GM10248 (cell line): ENCODE measurements at regions of chr7 and their contacts with region 1.

Region 1: DNA sequence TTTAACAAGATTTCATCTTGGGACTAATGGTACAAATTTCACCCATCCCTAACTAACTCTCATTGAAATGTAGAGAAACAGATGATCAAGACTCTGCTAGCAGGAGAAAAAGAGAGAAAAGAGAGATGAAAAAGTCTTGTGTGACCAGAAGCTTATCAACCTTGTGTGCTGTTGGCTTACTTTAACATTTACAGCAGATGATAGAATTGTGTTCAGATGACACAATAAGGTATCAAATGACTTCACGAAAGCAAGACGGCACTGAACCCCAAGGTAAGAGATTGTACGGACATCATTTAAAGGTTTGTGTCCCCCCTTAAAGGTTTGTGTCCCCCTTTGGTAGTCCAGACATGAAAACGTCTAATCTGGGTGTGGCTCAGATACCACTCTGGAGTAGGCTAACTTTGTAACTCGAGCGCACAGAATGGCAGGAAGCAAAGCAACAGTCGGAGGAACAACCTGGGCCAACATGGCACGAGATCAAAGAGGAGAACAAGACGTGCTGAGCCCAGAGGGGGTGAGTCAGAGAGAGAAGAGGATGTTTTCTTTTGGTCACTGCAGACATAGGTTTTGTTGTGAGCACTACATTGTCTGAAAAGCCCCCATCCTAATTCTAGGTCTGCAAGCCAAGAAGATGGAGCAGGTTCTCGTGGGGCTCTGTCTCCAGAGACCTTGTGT is 10.4 kb upstream of the LMBR1 start:
- DNase-seq: no peak
- CTCF ChIP-seq: no peak

Region 2: GRCh38 chr7:156892821-156893706 is 10.3 kb before region 1 on chr7 and contains the start of gene LMBR1:
- CTCF ChIA-PET with region 1: interaction called, 15 read pairs
- POLR2A ChIA-PET with region 1: no interaction called
- DNase-seq: peak; percentile 98
- CTCF ChIP-seq: peak; percentile 24

Region 3: DNA sequence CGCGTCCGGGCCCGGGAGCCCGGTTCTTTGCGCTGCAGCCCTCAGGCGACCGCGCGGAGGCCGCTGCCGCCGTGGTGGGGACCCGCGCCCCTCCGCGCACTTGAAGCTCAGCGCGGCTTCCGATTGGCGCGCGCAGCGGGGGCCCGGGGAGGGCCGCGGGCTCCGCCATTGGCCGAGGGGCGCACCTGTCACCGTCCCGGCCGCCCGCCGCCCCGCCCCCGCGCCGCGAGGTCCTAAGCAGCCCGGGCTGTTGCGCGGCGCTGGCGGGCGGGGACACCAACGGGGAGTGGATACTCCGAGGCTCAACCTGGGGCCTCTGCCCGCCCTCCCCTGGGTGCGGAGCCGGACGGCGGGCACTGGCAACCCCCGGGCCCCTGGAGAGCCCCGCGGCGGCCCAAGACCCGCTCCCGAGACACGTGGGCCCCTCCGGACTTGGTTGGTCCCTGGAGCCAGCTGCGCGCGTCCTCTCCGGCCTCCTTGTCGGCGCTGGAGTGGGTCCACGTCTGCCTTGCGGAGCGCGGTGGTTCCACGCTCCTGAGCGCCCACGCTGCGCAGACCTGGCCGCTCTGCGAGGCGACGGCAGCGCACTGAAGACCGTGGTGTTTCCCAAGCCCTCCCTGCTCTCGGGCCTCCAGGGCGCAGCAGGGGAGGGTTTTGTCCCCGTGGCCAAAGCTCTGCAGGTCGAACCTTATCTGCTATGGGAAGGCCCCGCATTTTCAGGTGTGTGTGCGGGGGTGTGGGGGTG is 107.4 kb after region 1 on chr7 and contains the start of gene MNX1:
- CTCF ChIA-PET with region 1: no interaction called
- POLR2A ChIA-PET with region 1: no interaction called
- DNase-seq: peak; percentile 94
- CTCF ChIP-seq: no peak